ENCODE measurements at regions of chr1 and their contacts with region 1.

Region 1: GRCh38 chr1:154272217-154272998 is at the start of gene HAX1:
- DNase-seq: peak; percentile 90 to 99 (median 94)
- ATAC-seq: peak; percentile 85
- H3K4me3 ChIP-seq: peak within 1 kb of the TSS; percentile 82
- H3K4me3 Mint-ChIP-seq: peak within 1 kb of the TSS; percentile 96
- H3K27ac ChIP-seq: peak within 1 kb of the TSS; percentile 81 to 89
- H3K27ac Mint-ChIP-seq: peak within 1 kb of the TSS; percentile 97
- H3K4me1 ChIP-seq: peaks cover 27% of the 10 kb centered on the region
- H3K4me1 Mint-ChIP-seq: peaks cover 37% of the 10 kb centered on the region
- H3K27me3 ChIP-seq: no peaks in the 10 kb centered on the region
- H3K27me3 Mint-ChIP-seq: no peaks in the 10 kb centered on the region
- CTCF ChIP-seq: peak; percentile 76
- total RNA-seq, gene HAX1: 57.5 to 62.5 TPM

Region 2: DNA sequence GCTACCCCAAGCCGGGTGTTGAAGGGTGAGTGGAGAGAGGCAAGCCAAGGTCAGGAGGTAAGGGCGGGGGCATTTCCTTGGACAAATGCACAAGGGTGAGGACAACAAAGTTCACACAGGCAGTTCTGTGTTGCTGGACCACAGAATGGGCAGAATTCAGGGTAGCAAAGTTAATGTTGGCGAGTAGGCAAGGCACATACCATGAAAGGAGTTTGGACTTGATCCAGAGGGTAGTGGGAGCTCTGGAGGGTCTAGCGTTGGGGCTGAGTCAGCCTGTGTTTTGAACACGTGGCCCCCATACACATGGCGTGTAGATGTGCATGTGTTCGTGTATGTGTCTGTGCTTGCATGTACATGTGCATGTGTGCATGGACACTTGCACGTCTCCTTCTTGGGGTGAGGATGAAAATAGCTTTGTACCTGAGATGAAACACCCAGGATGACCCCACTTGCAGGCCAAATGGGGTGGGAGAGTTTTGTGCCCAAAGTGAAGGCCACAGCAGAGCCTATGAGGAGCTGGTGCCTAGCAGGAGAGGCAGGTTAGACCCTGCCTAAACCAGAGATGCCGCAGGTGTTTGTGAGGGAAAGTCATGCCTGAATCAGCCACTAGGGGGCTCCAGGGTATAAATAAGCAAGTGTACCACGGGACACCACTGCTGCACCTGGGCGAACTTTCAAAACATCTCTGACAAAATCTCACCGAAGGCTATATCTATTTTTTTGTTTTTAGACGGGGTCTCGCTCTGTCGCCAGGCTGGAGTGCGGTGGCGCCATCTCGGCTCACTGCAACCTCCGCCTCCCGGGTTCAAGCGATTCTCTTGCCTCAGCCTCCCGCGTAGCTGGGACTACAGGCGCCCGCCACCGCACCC is 475.4 kb before region 1 on chr1:
- CTCF ChIA-PET with region 1: no interaction called
- POLR2A ChIA-PET with region 1: no interaction called
- intact Hi-C with region 1: loop called (anchors 1 to 5 kb)
- DNase-seq: peak; percentile 70 to 92 (median 84)
- ATAC-seq: peak; percentile 98
- H3K4me3 ChIP-seq: no peak overlapping the region
- H3K4me3 Mint-ChIP-seq: no peak overlapping the region
- H3K27ac ChIP-seq: no peak overlapping the region
- H3K27ac Mint-ChIP-seq: no peak overlapping the region
- H3K4me1 ChIP-seq: peaks cover 13% of the 10 kb centered on the region
- H3K4me1 Mint-ChIP-seq: peaks cover 5% of the 10 kb centered on the region
- H3K27me3 ChIP-seq: no peaks in the 10 kb centered on the region
- H3K27me3 Mint-ChIP-seq: no peaks in the 10 kb centered on the region
- CTCF ChIP-seq: peak; percentile 84

Region 3: GRCh38 chr1:154183045-154183915 is 89.1 kb before region 1 on chr1:
- CTCF ChIA-PET with region 1: interaction called, 3 read pairs
- POLR2A ChIA-PET with region 1: no interaction called
- intact Hi-C with region 1: loop called (anchors 1 kb)
- DNase-seq: peak; percentile 85 to 96 (median 92)
- ATAC-seq: peak; percentile 78
- H3K4me3 ChIP-seq: peak overlapping the region; percentile 88
- H3K4me3 Mint-ChIP-seq: peak overlapping the region; percentile 97
- H3K27ac ChIP-seq: peak overlapping the region; percentile 90 to 93
- H3K27ac Mint-ChIP-seq: peak overlapping the region; percentile 96
- H3K4me1 ChIP-seq: peaks cover 46% of the 10 kb centered on the region
- H3K4me1 Mint-ChIP-seq: peaks cover 54% of the 10 kb centered on the region
- H3K27me3 ChIP-seq: no peaks in the 10 kb centered on the region
- H3K27me3 Mint-ChIP-seq: peaks cover 5% of the 10 kb centered on the region
- CTCF ChIP-seq: no peak

Region 4: DNA sequence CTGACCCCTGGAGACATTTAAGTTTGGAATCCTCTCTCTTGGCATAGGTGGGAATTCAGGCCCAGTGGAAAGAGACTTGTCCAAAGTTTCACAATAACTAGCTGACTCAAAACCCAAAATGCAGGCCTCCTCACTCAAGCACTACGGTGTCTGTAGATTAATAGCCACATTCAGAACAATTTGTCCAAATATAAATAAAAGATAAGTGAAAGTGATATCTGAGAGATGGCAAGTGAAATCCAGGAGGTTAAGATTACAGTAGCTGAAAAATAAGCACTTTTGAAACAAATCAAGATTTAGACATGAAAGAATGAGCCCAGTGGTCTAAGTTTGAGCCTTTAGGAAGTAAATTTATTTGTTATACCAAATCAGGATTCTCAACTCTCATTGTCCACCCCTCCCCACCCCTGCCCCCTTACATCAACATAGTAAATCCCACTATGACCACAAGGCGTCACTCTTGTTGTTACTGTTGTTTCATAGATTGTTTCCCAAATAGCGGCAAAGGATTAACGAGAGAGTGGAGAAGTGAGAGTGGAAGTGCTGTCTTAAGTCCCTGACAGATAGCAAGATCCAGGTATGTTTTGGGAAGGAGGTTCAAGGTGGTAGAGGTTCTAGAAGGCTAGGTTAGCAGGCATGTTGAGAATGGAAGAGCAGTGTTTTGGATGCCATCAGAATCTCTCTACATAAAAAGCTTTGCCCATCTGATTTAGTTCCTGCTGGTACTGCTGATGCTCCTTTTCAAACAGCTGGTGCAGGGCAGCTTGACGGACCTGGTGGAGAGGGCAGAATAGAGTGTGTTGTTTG is 73.4 kb before region 1 on chr1:
- CTCF ChIA-PET with region 1: interaction called, 16 read pairs
- POLR2A ChIA-PET with region 1: no interaction called
- intact Hi-C with region 1: loop called (anchors 1 kb)
- DNase-seq: peak in 11 of 14 experiments; percentile 5 to 81 (median 30)
- ATAC-seq: peak; percentile 90
- H3K4me3 ChIP-seq: no peak overlapping the region
- H3K4me3 Mint-ChIP-seq: no peak overlapping the region
- H3K27ac ChIP-seq: no peak overlapping the region
- H3K27ac Mint-ChIP-seq: no peak overlapping the region
- H3K4me1 ChIP-seq: peaks cover 3% of the 10 kb centered on the region
- H3K4me1 Mint-ChIP-seq: no peaks in the 10 kb centered on the region
- H3K27me3 ChIP-seq: no peaks in the 10 kb centered on the region
- H3K27me3 Mint-ChIP-seq: peaks cover 3% of the 10 kb centered on the region
- CTCF ChIP-seq: peak; percentile 71

Region 5: DNA sequence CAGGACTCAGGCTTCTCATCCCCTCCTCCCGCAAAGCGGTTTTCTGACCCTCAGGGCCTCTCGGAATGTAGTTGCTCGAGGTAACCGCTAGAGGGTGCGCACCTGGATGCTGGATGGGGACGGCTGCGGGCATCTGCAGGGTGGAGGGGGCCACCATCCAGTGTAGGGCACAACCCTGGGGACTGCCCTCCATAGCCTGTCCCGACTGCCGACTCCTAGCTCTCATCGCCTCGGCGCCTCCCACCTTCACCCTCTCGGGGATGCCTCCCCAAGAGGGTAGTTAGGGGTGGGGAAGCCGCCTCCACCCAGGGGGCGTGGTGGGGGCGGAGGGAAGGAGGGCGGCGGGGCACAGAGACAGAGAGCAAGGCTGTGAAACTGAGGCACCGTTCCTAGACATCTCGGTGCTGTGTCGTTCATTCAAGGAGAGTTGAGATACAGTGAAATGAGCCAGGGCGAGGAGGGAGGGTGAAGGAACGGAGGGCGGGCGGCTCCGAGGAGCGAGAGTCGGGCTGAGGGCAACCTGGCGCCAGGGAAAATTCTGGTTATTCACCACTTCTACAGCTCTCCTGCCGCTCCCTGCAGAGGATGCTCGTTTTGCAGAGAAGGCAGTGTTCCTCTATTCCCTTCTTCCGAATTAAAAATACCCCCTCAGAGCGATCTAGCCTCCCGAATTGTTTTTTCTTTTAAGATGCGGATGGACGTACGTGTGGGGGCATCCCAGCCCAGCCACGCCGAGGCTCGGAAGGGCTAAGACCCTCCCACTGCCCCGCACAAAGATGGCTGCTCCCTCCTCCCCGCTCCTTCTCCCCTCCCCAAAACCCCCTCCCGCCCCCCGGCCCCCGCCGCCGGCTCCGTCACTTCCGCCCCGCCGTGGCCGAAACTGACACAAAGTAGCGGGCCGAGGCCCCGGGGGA is 52.5 kb after region 1 on chr1 and contains the start of gene ATP8B2:
- CTCF ChIA-PET with region 1: interaction called, 4 read pairs
- POLR2A ChIA-PET with region 1: interaction called, 19 read pairs
- intact Hi-C with region 1: loop called in 1 of 2 experiments (anchors 1 kb)
- DNase-seq: peak; percentile 68 to 90 (median 74)
- ATAC-seq: peak; percentile 57
- H3K4me3 ChIP-seq: peak within 1 kb of the TSS; percentile 70
- H3K4me3 Mint-ChIP-seq: peak within 1 kb of the TSS; percentile 94
- H3K27ac ChIP-seq: peak within 1 kb of the TSS; percentile 80 to 86
- H3K27ac Mint-ChIP-seq: peak within 1 kb of the TSS; percentile 90
- H3K4me1 ChIP-seq: peaks cover 52% of the 10 kb centered on the region
- H3K4me1 Mint-ChIP-seq: peaks cover 36% of the 10 kb centered on the region
- H3K27me3 ChIP-seq: no peaks in the 10 kb centered on the region
- H3K27me3 Mint-ChIP-seq: no peaks in the 10 kb centered on the region
- CTCF ChIP-seq: peak; percentile 95
- total RNA-seq, gene ATP8B2: 72.7 to 80.7 TPM

Region 6: GRCh38 chr1:154546264-154547063 is 274.1 kb after region 1 on chr1:
- CTCF ChIA-PET with region 1: no interaction called
- POLR2A ChIA-PET with region 1: no interaction called
- intact Hi-C with region 1: no loop called
- DNase-seq: peak; percentile 28 to 77 (median 38)
- ATAC-seq: peak; percentile 93
- H3K4me3 ChIP-seq: no peak overlapping the region
- H3K4me3 Mint-ChIP-seq: no peak overlapping the region
- H3K27ac ChIP-seq: no peak overlapping the region
- H3K27ac Mint-ChIP-seq: no peak overlapping the region
- H3K4me1 ChIP-seq: no peaks in the 10 kb centered on the region
- H3K4me1 Mint-ChIP-seq: peaks cover 4% of the 10 kb centered on the region
- H3K27me3 ChIP-seq: no peaks in the 10 kb centered on the region
- H3K27me3 Mint-ChIP-seq: no peaks in the 10 kb centered on the region
- CTCF ChIP-seq: peak; percentile 68

Measured in CD4-positive, alpha-beta T cell (primary cell).